Activated CD4-positive, alpha-beta T cell treated with anti-CD3 and anti-CD28 coated beads, Interleukin-2, amount 10 ng/mL, durations not matched to agents 24 days and 14 days (primary cell): ENCODE measurements at regions of chr1 and their contacts with region 1.

Region 1: GRCh38 chr1:36385410-36386257 is at the start of gene STK40:
- DNase-seq: peak; percentile 99
- H3K4me3 Mint-ChIP-seq: peak within 1 kb of the TSS; percentile 92
- H3K27ac Mint-ChIP-seq: peak within 1 kb of the TSS; percentile 99
- H3K4me1 Mint-ChIP-seq: peaks cover 62% of the 10 kb centered on the region
- H3K27me3 Mint-ChIP-seq: no peaks in the 10 kb centered on the region
- total RNA-seq, gene STK40: 40.6 and 51.3 TPM in 2 replicates

Region 2: DNA sequence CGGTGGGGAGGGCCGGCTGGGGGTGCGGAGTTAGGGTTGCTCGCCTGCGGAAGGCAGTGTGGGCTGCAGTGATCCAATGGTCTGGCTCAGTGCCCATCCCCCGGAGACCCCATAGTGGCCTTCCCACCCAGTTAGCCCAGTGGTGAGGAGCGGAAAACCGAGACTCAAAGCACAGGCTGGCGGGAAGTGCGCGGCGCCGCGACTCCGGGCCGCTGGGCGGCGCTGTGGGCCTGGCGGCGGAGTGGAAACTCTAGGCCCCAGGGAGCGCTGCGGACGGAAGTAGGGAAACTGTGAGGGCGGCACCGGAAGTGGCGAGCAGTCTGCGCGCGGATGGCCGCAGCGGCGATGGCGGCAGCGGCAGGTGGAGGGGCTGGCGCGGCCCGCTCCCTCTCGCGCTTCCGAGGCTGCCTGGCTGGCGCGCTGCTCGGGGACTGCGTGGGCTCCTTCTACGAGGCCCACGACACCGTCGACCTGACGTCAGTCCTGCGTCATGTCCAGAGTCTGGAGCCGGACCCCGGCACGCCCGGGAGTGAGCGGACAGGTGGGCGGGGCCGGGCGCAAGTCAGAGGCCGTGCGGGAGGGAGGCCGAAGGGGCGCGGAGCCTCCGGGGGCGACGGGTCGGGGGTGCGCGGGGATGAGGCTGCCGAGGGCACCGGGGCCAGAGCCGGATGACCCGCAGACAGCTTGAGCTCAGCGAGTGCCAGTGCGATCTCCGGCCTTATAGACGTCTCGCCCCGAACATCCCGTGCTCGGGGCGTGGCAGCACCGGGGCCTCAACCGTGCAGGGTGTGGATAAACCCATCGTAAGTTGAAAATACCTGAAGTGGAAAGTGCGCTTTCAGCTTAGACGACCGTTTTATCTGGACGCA is 296.8 kb before region 1 on chr1 and contains the start of gene ADPRS:
- intact Hi-C with region 1: loop called (anchors 5 kb)
- DNase-seq: peak; percentile 97
- H3K4me3 Mint-ChIP-seq: peak within 1 kb of the TSS; percentile 95
- H3K27ac Mint-ChIP-seq: peak within 1 kb of the TSS; percentile 89
- H3K4me1 Mint-ChIP-seq: peaks cover 21% of the 10 kb centered on the region
- H3K27me3 Mint-ChIP-seq: peaks cover 5% of the 10 kb centered on the region
- total RNA-seq, gene ADPRS: 35.3 and 38.8 TPM in 2 replicates

Region 3: GRCh38 chr1:36223993-36224536 is 161.6 kb before region 1 on chr1 and contains the start of gene THRAP3:
- intact Hi-C with region 1: loop called (anchors 1 kb)
- DNase-seq: peak; percentile 100
- H3K4me3 Mint-ChIP-seq: peak within 1 kb of the TSS; percentile 97
- H3K27ac Mint-ChIP-seq: peak within 1 kb of the TSS; percentile 100
- H3K4me1 Mint-ChIP-seq: peaks cover 29% of the 10 kb centered on the region
- H3K27me3 Mint-ChIP-seq: no peaks in the 10 kb centered on the region
- total RNA-seq, gene THRAP3: 157 and 161 TPM in 2 replicates

Region 4: GRCh38 chr1:36323597-36324352 is 61.9 kb before region 1 on chr1 and contains the start of gene EVA1B:
- intact Hi-C with region 1: loop called (anchors 5 kb)
- DNase-seq: peak; percentile 89
- H3K4me3 Mint-ChIP-seq: peak within 1 kb of the TSS; percentile 84
- H3K27ac Mint-ChIP-seq: peak within 1 kb of the TSS; percentile 62
- H3K4me1 Mint-ChIP-seq: peaks cover 27% of the 10 kb centered on the region
- H3K27me3 Mint-ChIP-seq: peaks cover 2% of the 10 kb centered on the region
- total RNA-seq, gene EVA1B: 7.5 and 9.0 TPM in 2 replicates

Region 5: DNA sequence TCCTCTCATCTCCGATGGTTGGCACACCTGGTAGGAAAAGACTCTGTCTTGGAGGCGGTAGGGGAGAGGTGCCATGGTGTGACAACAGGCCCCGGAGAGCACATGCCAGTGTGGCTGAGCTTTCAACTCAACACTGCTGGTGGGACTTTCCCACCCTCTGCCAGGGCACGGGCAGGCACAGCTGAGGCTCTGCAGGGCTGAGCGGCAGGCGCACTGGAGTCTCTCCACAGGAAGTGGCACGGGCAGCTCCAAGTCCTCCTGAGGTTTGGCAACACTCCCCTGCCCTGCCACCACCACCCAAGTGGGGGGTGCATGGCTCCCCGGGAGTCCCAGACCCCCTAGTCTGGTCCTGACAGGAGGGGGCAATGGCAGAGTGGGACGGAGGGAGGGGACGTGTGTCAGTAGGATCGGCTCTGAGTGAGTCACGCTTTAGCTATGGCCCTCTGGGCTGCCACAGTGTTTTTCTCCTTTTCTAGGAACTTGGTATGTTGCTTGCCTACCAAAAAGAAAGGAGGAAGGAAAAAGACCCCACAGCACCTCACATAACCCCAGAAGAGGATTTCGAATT is 34.9 kb before region 1 on chr1:
- intact Hi-C with region 1: no loop called
- DNase-seq: peak; percentile 78
- H3K4me3 Mint-ChIP-seq: peak overlapping the region; percentile 22
- H3K27ac Mint-ChIP-seq: peak overlapping the region; percentile 62
- H3K4me1 Mint-ChIP-seq: peaks cover 23% of the 10 kb centered on the region
- H3K27me3 Mint-ChIP-seq: no peaks in the 10 kb centered on the region

Region 6: GRCh38 chr1:36420836-36421664 is 35.4 kb after region 1 on chr1:
- intact Hi-C with region 1: loop called (anchors 1 kb)
- DNase-seq: peak; percentile 98
- H3K4me3 Mint-ChIP-seq: peak overlapping the region; percentile 26
- H3K27ac Mint-ChIP-seq: peak overlapping the region; percentile 64
- H3K4me1 Mint-ChIP-seq: peaks cover 13% of the 10 kb centered on the region
- H3K27me3 Mint-ChIP-seq: no peaks in the 10 kb centered on the region

Region 7: DNA sequence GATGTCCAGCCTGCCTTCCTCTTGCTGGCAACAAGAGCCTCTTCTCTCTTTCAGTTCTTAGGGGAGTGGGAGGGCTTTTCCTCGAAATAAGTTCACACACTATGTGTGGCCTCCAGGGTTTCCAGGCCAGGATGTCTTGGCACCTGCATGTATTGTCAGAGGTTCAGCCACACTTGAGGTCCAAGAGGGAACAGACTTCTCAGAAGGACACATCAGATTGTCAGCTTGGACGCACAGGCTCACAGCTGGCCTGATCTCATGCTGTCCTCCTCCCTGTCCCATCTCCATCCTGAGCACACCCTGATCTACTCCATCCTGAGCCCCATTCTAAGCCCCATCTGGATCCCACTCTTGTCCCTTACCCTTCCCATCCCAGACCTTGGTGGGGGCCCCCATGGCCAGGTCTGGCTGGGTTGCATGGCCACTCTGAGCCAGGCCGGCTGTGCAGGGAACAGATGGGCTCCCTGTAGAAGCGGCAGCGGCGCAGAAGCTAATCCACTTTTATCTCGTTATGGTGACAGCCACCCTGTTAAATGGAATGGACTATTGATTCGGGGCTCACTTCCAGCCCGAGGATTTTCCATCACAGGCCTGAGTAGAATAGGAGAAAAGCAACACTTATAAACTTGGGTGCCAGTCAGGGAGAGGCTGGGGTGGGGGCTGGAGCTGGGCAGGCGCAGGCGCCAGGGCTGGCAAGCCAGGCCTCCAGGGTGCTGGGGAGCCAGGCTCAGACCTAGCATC is 182.1 kb after region 1 on chr1:
- intact Hi-C with region 1: no loop called
- DNase-seq: no peak
- H3K4me3 Mint-ChIP-seq: no peak overlapping the region
- H3K27ac Mint-ChIP-seq: no peak overlapping the region
- H3K4me1 Mint-ChIP-seq: no peaks in the 10 kb centered on the region
- H3K27me3 Mint-ChIP-seq: peaks cover 4% of the 10 kb centered on the region